Activated CD4-positive, alpha-beta T cell treated with anti-CD3 and anti-CD28 coated beads, Interleukin-2, amount 10 ng/mL, durations not matched to agents 24 days and 14 days (primary cell): ENCODE measurements at regions of chr16 and their contacts with region 1.

Region 1: DNA sequence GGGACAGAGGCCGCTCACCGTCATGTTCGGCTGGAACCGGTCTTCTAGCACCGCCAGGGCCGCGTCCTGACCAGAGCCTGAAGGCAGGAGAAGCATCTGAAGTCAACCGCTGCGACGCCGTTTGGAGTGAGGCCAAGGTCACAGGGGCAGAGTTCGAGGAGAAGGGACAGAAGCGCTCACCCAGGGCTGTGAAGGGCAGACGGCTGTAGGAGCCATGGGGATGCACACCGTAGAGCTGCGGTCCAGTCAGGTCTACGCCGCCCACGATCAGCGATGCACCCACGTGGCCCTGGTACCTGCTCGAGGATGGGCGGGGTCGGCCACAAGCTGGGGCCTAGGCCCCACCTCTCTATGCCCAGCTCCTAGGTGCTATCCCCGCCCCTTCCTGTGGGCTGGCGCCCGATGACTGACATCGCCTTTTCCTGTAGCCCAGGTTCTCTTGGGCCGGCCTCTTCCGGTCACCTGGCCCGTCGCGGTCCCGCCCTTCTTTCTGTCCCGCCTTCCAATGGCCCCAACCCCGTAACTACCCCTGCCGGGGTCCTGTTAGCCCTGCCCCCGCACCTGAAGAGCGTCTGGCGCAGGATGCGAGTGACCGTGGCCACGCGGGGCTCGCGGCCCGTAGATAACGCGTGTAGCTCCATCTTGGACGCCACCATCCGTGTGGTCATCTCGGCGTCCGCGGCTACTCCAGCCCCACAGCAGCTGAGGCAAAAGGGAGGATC is 1.1 kb downstream of the PSMB10 start:
- DNase-seq: peak; percentile 98
- H3K4me3 Mint-ChIP-seq: peak overlapping the region; percentile 100
- H3K27ac Mint-ChIP-seq: peak overlapping the region; percentile 92
- H3K4me1 Mint-ChIP-seq: peaks cover 33% of the 10 kb centered on the region
- H3K27me3 Mint-ChIP-seq: no peaks in the 10 kb centered on the region

Region 2: DNA sequence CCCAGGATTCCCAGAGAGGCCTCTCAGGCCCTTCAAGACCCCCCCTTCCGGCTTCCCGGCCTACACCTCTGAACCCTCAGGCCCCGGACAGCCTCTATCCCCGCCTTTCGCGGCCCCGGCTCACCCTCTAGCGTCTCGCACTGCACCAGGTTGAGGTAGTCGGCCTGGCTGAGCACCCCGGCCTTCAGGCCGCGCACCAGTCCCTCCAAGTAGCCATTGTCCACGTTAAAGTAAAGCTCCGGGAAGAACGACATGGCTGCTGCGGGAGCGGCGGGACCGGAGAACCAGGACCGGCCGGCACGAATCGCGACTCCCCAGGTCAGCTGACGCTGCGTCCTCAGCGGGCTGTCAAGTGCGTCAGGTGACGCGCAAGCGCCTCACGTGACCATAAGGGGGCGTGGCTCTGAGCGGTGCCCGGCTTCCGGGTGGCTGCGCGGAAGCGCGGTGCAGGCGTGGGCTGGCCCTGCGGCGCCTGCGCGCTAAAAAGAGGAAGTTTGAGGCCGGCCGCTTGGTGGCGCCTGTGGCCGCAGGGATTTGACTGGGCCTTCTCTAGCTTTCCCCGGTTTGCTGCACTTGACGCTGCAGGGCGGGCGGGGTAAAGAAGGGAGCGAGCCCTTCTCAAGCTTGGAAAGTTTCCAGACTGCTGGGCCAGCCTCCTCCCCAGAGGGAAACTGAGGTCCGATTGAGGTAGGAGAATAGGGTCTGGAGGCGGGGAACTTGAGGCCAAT is 454.6 kb before region 1 on chr16 and contains the start of gene ATP6V0D1:
- intact Hi-C with region 1: loop called (anchors 5 kb)
- DNase-seq: peak; percentile 100
- H3K4me3 Mint-ChIP-seq: peak within 1 kb of the TSS; percentile 100
- H3K27ac Mint-ChIP-seq: peak within 1 kb of the TSS; percentile 97
- H3K4me1 Mint-ChIP-seq: peaks cover 17% of the 10 kb centered on the region
- H3K27me3 Mint-ChIP-seq: no peaks in the 10 kb centered on the region
- total RNA-seq, gene ATP6V0D1: 30.9 and 31.8 TPM in 2 replicates

Region 3: GRCh38 chr16:67653787-67654396 is 281.7 kb before region 1 on chr16:
- intact Hi-C with region 1: no loop called
- DNase-seq: no peak
- H3K4me3 Mint-ChIP-seq: no peak overlapping the region
- H3K27ac Mint-ChIP-seq: no peak overlapping the region
- H3K4me1 Mint-ChIP-seq: peaks cover 13% of the 10 kb centered on the region
- H3K27me3 Mint-ChIP-seq: no peaks in the 10 kb centered on the region

Region 4: DNA sequence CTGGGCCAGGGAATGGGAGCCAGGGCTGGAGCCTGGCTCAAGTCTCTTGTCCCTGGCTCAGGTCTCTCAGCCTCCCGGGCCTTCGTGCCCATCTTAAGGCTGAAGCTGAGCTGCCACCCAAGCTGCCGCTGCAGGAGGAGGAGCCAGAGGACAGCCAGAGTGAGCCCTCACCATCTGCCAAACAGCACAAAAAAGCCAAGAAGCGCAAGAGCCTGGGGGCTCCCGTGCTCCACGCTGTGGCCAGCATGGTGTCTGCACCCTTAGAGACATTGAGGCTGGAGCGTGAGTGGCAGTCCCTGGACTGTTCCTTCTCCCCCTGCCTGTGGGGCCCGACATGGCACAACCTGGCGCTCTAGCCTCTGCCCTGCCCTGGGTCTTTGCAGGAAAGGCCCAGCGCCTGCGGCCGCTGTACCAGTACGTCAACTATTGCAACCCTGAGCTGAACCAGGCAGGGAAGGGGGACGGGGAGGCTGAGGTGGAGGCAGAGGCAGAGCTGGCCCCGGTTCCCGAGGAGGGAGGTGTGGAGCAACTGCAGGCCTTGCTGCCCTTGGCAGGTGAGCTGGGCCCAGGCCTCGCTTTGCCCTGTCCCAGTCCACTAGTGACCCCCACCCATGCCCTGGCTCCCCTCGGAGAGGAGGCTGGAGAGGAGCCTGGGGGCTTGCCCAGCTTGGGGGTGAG is 267.6 kb before region 1 on chr16:
- intact Hi-C with region 1: loop called (anchors 10 kb)
- DNase-seq: peak; percentile 94
- H3K4me3 Mint-ChIP-seq: peak overlapping the region; percentile 91
- H3K27ac Mint-ChIP-seq: no peak overlapping the region
- H3K4me1 Mint-ChIP-seq: peaks cover 22% of the 10 kb centered on the region
- H3K27me3 Mint-ChIP-seq: no peaks in the 10 kb centered on the region

Region 5: DNA sequence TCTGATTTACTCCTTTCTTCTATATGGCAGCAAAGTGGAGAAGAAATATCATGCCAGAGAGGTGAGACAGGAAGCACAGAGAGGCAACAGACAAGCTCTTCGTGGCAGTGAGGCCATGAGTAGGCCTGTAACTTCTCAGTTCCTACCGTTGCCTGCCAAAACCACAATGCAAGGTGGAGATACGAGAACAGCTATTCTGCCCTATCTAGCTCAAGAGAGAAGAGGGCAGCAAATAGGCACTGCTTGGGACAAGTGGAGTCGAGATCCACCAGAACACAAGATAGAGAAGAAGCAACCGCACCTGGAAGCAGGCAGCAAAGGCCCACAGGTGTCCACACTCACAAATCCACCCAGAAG is 154.0 kb before region 1 on chr16:
- intact Hi-C with region 1: no loop called
- DNase-seq: peak; percentile 77
- H3K4me3 Mint-ChIP-seq: peak overlapping the region; percentile 4
- H3K27ac Mint-ChIP-seq: peak overlapping the region; percentile 79
- H3K4me1 Mint-ChIP-seq: peaks cover 22% of the 10 kb centered on the region
- H3K27me3 Mint-ChIP-seq: no peaks in the 10 kb centered on the region

Region 6: GRCh38 chr16:67872786-67873537 is 62.6 kb before region 1 on chr16 and contains the start of gene EDC4:
- intact Hi-C with region 1: loop called (anchors 5 kb)
- DNase-seq: peak; percentile 98
- H3K4me3 Mint-ChIP-seq: peak within 1 kb of the TSS; percentile 86
- H3K27ac Mint-ChIP-seq: peak within 1 kb of the TSS; percentile 88
- H3K4me1 Mint-ChIP-seq: peaks cover 27% of the 10 kb centered on the region
- H3K27me3 Mint-ChIP-seq: no peaks in the 10 kb centered on the region
- total RNA-seq, gene EDC4: 112 and 122 TPM in 2 replicates

Region 7: DNA sequence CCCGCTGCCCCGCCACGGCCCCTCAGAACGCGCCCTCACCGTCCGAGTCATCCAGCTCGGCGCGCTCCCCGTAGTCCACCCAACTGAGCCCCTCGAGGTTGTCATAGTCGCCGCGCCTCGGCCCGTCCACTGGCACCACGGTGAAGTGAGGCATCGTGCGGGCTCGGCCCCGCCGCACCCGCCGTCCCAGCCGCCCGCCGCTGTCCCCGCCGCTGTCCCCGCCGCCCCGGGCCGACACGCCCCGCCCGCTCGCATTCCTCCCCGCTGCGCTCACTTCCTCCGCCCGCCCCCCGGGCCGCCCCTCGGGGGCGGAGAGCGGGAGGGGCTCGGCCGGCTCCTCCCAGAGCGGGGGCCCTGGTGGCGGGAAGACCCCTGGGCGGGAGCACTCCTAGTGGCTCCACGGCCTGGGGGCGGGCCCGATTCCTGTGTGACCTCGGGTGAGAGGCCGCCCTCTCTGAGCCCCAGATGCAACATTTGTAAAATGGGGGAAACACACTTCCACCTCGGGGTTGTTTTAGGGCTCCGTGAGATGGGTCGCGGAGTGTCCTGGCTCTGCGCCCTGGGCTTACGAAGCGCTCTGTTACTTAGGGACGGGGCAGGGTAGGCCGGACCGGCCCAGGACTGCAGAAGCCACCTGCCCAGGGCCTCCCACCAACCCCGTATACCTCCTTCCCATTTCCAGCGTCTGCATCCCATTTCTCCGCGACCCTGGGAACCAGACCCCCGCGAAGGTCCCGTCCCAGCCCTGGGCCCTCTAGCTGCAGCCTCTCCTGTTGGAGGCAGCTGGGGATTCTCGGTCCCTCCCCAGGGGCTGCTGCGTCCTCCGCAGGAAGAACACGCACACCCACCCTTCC is 33.1 kb after region 1 on chr16 and contains the start of gene SLC12A4:
- intact Hi-C with region 1: loop called (anchors 1 kb)
- DNase-seq: peak; percentile 98
- H3K4me3 Mint-ChIP-seq: peak within 1 kb of the TSS; percentile 97
- H3K27ac Mint-ChIP-seq: peak within 1 kb of the TSS; percentile 95
- H3K4me1 Mint-ChIP-seq: peaks cover 24% of the 10 kb centered on the region
- H3K27me3 Mint-ChIP-seq: peaks cover 2% of the 10 kb centered on the region
- total RNA-seq, gene SLC12A4: 40.6 and 44.7 TPM in 2 replicates

Region 8: DNA sequence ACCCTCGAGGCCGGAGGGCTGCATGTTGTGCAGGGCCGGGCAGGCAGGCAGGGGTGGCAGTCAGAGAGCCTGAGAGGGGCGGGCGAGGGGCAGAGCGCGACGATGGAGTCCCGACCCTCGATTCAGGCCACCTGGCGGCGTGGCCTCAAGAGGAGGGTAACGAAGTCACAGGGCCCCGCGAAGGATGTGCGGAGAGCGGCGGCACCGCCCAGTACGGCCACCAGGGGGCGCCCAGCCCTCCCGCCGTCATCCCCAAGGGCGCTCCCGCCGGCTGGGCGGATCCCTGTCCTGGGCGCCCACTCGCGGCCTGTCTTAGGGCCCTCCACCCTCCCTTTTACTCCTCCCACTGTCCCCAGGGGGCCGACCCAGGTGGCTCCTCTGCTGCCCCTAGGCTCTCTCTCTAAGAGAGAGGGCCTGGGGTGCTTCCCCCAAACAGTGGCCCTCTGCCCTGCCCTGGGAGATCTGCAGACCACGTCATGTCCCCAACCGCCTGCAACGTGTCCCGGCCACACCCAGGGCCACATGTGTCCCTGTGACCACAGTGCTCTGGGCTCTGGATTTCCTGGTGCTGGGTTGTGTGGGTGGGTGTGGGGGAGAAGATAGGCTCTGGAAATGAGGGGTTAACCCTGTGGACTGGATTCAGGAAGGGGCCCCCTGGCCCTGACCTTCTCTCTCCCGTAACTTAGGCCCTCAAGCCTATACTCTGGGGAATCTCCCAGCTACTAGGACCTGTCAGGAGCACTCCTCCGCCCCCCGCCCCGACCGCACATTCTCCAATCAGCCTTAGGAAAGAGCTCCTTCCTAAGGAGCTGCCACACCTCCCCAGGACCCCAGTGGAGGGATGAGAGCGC is 57.9 kb after region 1 on chr16:
- intact Hi-C with region 1: no loop called
- DNase-seq: peak; percentile 95
- H3K4me3 Mint-ChIP-seq: peak overlapping the region; percentile 86
- H3K27ac Mint-ChIP-seq: peak overlapping the region; percentile 96
- H3K4me1 Mint-ChIP-seq: peaks cover 29% of the 10 kb centered on the region
- H3K27me3 Mint-ChIP-seq: no peaks in the 10 kb centered on the region

Region 9: DNA sequence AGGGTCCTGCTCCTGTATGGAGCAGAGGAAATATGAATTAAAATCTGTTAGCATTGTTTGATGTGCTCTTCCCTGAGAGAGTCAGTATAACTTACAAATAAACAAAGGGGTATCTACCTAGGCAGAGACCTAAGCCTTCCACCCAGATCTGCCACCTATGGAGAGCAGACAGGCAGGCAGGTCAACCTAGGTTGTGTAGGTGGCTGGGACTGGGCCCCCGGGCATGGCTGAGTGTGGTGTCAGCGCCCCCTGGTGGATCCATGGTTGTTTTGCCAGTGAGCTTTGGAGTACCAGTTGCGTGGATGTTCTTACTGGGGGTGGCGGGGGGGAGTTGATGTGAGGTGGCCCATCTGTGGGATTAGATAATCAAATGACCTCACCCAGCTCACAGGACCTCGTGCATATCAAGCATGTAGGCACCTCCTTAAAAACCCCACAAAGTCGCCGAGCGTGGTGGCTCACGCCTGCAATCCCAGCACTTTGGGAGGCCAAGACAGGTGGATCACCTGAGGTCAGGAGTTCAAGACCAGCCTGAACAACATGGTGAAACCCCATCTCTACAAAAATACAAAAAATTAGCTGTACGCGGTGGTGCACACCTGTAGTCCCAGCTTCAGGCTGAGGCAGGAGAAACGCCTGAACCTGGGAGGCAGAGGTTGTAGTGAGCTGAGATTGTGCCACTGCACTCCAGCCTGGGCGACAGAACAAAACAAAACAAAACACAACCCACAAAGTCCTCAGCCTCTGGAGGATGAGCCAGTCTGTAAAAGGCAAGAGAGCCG is 105.1 kb after region 1 on chr16:
- intact Hi-C with region 1: loop called (anchors 5 kb)
- DNase-seq: peak; percentile 96
- H3K4me3 Mint-ChIP-seq: no peak overlapping the region
- H3K27ac Mint-ChIP-seq: peak overlapping the region; percentile 51
- H3K4me1 Mint-ChIP-seq: peaks cover 16% of the 10 kb centered on the region
- H3K27me3 Mint-ChIP-seq: no peaks in the 10 kb centered on the region

Region 10: GRCh38 chr16:68113059-68113761 is 177.6 kb after region 1 on chr16:
- intact Hi-C with region 1: no loop called
- DNase-seq: no peak
- H3K4me3 Mint-ChIP-seq: no peak overlapping the region
- H3K27ac Mint-ChIP-seq: no peak overlapping the region
- H3K4me1 Mint-ChIP-seq: peaks cover 53% of the 10 kb centered on the region
- H3K27me3 Mint-ChIP-seq: no peaks in the 10 kb centered on the region